Activated CD4-positive, alpha-beta memory T cell treated with anti-CD3 and anti-CD28 coated beads for 36 hours (primary cell): ENCODE measurements at regions of chr6 and their contacts with region 1.

Region 1: DNA sequence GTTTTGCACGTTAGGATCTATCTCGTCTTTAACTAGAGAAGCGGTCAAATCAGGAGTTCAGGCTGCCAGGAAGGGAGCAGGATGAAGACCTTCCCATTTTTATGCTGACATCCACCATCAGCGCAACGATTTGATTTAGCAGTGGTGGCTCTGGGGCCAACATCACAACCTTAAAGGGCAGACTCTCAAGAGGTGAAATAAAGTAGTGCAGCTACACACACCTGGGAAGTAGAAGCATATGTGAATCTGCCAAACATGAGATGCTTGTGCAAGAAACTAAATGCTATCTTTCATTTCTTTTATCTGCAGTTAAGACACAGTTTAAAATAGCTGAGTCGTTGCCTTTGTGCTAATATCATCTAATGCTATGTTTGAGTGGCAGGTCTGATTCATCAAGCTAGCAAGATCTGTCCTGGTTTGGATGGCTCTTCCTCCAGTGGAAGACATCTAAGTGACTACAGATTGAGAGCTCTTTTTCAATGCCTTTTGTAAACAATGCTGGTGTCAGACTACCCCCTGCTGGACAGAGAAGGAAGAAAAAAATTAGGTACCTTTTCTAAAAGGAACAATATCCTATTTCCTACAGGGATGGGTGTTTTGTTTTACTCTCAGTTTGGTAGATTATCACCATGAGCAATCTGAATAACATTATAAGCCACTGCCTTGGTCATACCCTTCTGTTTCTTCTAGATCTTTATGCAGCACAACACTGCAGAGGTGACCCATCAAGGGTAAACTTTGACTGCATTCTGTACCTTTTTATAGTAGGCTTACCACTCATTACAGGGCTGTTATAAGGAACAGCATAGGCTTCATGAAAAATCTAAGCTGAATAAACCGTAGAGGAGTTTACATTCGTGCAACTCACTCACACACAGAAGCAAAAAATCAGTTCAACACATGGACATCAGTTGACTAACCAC is 171.6 kb upstream of the FBXL4 start:
- DNase-seq: no peak
- H3K4me3 Mint-ChIP-seq: no peak overlapping the region
- H3K27ac Mint-ChIP-seq: no peak overlapping the region
- H3K4me1 Mint-ChIP-seq: peaks cover 3% of the 10 kb centered on the region
- H3K27me3 Mint-ChIP-seq: peaks cover 28% of the 10 kb centered on the region

Region 2: GRCh38 chr6:97497713-97498331 is 1621.5 kb before region 1 on chr6:
- CTCF ChIA-PET with region 1: interaction called, 14 read pairs
- POLR2A ChIA-PET with region 1: no interaction called
- intact Hi-C with region 1: no loop called
- DNase-seq: peak; percentile 70
- H3K4me3 Mint-ChIP-seq: no peak overlapping the region
- H3K27ac Mint-ChIP-seq: no peak overlapping the region
- H3K4me1 Mint-ChIP-seq: no peaks in the 10 kb centered on the region
- H3K27me3 Mint-ChIP-seq: peaks cover 12% of the 10 kb centered on the region

Region 3: GRCh38 chr6:98947351-98948292 is 171.7 kb before region 1 on chr6 and contains the start of gene FBXL4:
- CTCF ChIA-PET with region 1: interaction called, 4 read pairs
- POLR2A ChIA-PET with region 1: no interaction called
- intact Hi-C with region 1: loop called (anchors 1 kb)
- DNase-seq: peak; percentile 88
- H3K4me3 Mint-ChIP-seq: peak within 1 kb of the TSS; percentile 93
- H3K27ac Mint-ChIP-seq: peak within 1 kb of the TSS; percentile 93
- H3K4me1 Mint-ChIP-seq: peaks cover 28% of the 10 kb centered on the region
- H3K27me3 Mint-ChIP-seq: no peaks in the 10 kb centered on the region
- total RNA-seq, gene FBXL4: 13.8 TPM